Activated CD4-positive, alpha-beta T cell treated with anti-CD3 and anti-CD28 coated beads, Interleukin-2, amount 10 ng/mL, durations not matched to agents 24 days and 14 days (primary cell): ENCODE measurements at regions of chr7 and their contacts with region 1.

Region 1: GRCh38 chr7:82676777-82677463 is 233.3 kb upstream of the CACNA2D1 start:
- DNase-seq: no peak
- H3K4me3 Mint-ChIP-seq: no peak overlapping the region
- H3K27ac Mint-ChIP-seq: no peak overlapping the region
- H3K4me1 Mint-ChIP-seq: peaks cover 13% of the 10 kb centered on the region
- H3K27me3 Mint-ChIP-seq: no peaks in the 10 kb centered on the region

Region 2: DNA sequence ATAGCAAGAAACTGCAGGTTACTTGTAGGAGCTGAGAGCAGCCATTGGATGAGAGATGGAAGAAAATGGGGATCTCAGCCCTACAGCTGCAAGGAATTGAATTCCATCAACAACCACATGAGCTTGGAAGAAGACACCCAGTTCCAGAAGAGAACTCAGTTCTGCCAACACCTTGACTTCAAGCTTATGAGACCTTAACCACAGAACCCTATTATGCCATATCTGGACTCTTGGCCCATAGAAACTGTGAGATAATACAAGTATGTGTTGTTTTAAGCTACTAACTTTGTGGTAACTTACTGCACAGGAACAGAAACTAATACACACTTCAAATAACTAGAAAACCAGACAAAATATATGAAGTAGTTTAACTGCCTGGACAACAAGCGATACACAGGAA is 21.0 kb before region 1 on chr7:
- intact Hi-C with region 1: no loop called
- DNase-seq: no peak
- H3K4me3 Mint-ChIP-seq: no peak overlapping the region
- H3K27ac Mint-ChIP-seq: no peak overlapping the region
- H3K4me1 Mint-ChIP-seq: no peaks in the 10 kb centered on the region
- H3K27me3 Mint-ChIP-seq: no peaks in the 10 kb centered on the region

Region 3: GRCh38 chr7:82665966-82666507 is 10.9 kb before region 1 on chr7:
- intact Hi-C with region 1: loop called (anchors 1 kb)
- DNase-seq: no peak
- H3K4me3 Mint-ChIP-seq: no peak overlapping the region
- H3K27ac Mint-ChIP-seq: no peak overlapping the region
- H3K4me1 Mint-ChIP-seq: no peaks in the 10 kb centered on the region
- H3K27me3 Mint-ChIP-seq: peaks cover 1% of the 10 kb centered on the region